Activated CD4-positive, alpha-beta T cell treated with anti-CD3 and anti-CD28 coated beads, Interleukin-2, amount 10 ng/mL, durations not matched to agents 24 days and 14 days (primary cell): ENCODE measurements at regions of chr10 and their contacts with region 1.

Region 1: DNA sequence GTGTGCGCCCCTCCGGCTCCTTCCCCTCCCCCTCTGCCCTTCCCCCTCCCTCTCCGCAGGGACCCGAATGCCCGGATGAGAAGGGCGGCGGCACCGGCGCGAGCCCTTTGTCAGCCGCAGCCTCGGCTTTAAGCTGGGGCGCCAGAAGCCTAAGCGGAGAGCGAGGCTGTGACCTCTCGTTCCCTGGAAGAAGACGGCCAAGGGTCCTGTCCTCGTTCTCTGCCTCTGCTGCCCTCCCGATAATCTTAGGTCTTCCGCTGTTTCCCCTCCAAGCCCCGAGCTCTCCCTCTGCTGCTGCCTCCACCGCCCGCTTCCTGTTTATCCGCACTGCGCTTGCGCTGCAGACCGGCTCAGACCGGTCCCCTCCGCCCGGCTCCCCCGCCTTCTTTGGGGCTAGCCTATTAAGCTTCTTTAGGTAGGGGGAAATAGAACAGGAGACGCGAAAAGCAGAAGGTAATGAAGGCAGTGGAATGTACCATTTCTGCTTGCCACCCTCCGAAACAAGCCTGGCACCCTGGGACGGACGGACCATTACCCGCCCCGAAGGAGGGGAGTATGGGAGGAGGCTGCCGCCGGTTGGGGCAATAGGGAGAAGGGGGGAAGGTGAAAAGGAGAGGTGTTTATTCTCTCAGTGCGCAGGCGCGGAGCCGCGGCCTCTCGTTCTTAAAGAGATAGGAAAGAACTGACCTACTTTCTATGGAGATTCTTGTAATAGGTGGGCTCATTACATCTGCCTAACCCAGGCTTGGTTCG is at the start of gene OGA:
- DNase-seq: peak; percentile 99
- H3K4me3 Mint-ChIP-seq: peak within 1 kb of the TSS; percentile 89
- H3K27ac Mint-ChIP-seq: peak within 1 kb of the TSS; percentile 95
- H3K4me1 Mint-ChIP-seq: peaks cover 48% of the 10 kb centered on the region
- H3K27me3 Mint-ChIP-seq: no peaks in the 10 kb centered on the region
- total RNA-seq, gene OGA: 99.9 and 102 TPM in 2 replicates

Region 2: DNA sequence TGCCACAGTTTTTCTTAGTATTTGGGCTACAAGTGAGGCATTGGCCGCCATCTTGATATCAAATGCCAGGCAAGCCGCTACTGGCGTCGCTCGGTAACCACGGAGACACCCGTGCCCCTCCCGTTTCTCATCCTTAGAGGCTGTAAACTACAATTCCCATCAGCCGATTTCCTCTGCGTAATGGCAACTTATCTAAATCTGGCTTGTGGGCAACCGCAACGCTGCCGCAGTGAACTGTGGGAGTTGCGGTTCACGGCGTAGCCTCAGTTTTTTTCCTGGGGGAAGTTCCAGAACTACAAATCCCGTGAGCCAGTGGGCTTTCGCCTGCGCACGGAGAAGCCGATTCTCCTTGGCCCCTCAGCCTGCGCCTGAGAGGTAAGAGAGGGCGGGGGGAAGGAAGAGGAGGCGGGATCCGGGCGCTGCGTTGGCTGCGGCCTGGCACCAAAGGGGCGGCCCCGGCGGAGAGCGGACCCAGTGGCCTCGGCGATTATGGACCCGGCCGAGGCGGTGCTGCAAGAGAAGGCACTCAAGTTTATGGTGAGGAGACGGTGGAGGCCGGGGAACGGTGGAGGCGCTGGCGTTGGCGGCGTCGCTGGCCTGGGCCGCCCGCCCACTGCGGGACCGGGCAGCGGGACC is 464.5 kb before region 1 on chr10 and contains the start of gene BTRC:
- intact Hi-C with region 1: loop called (anchors 10 kb)
- DNase-seq: peak; percentile 99
- H3K4me3 Mint-ChIP-seq: peak within 1 kb of the TSS; percentile 90
- H3K27ac Mint-ChIP-seq: peak within 1 kb of the TSS; percentile 98
- H3K4me1 Mint-ChIP-seq: peaks cover 24% of the 10 kb centered on the region
- H3K27me3 Mint-ChIP-seq: peaks cover 19% of the 10 kb centered on the region
- total RNA-seq, gene BTRC: 16.2 and 19.0 TPM in 2 replicates

Region 3: DNA sequence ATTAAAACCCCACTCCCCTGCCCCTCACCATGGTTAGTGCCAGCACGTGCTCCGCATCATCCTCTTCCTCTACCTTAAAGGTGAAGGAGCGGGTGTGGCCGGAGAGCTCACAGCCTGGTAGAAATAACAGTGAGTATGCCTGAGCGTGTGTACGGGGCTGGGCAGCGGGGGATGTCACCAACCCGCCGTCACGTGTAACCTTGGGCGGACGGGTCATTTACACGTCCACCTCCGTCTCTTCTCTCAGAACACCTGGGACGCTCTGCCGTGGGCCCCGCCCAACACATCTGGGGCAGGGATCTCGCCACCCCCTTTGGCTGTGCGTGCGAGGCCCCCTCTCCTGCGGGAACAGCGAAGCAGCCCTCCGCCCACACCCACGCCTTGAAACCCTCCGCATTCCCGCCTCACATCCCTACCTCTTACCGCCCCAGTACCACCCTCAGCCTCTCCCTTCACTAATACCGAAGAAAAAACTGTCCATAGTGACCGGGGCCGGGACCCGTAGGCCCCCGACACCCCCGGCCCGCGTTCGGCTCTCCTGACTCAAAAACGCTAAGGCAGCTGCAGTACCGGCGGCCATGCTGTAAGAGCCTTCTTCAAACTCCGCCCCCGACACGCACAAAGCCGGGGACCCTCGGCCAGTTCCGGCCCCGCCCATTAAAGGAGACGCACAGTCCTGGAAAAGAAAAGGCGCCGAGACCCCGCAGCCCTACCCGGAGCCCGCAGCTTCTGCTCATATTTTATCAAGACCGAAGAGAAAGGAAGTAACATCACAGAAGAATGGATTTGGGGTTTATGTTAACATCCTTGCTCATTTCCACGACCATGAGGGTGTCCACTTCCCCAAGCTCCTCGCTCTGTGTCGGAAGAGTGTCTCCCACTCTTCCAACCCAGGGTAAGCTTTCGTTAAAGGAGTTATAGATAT is 35.2 kb before region 1 on chr10 and contains the start of gene NPM3:
- intact Hi-C with region 1: loop called (anchors 1 kb)
- DNase-seq: peak; percentile 96
- H3K4me3 Mint-ChIP-seq: peak within 1 kb of the TSS; percentile 100
- H3K27ac Mint-ChIP-seq: peak within 1 kb of the TSS; percentile 99
- H3K4me1 Mint-ChIP-seq: peaks cover 47% of the 10 kb centered on the region
- H3K27me3 Mint-ChIP-seq: peaks cover 9% of the 10 kb centered on the region
- total RNA-seq, gene NPM3: 172 and 175 TPM in 2 replicates

Region 4: DNA sequence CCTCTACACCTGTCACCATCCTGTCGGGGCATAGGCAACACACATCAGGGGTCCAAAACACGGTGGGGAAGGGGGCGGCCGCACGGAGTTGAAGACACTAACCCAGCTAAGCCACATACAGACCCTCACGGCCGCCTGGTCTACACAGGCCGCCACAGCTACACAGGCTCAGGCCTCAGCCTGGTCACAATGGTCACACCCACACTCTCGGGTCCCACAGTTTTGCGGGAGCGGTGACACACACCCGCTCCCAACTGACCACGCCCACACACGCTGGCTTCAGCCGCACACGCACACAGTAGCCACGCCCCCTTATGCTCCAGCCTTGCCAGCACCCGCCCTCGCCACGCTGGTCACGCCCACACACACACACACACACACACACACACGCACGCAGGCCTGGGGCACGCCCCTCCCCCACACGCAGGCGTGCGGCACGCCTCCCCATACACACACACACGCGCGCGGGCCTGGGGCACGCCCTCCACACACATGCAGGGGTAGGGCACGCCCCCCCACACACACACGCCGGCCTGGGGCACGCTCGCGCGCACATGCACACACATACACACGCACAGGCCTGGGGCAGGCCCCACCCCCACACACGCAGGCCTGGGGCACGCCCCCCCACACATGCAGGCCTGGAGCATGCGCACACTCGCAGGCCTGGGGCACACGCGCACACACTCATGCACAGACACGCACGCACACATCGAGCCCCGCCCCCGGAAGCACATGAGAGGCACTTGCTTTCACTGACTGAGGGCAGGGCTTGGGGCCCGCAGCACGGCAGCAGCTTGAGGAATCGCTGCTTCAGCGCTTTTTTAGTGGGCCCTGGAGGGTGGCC is 12.2 kb after region 1 on chr10:
- intact Hi-C with region 1: loop called (anchors 1 kb)
- DNase-seq: peak; percentile 97
- H3K4me3 Mint-ChIP-seq: peak overlapping the region; percentile 87
- H3K27ac Mint-ChIP-seq: peak overlapping the region; percentile 99
- H3K4me1 Mint-ChIP-seq: peaks cover 49% of the 10 kb centered on the region
- H3K27me3 Mint-ChIP-seq: peaks cover 3% of the 10 kb centered on the region

Region 5: DNA sequence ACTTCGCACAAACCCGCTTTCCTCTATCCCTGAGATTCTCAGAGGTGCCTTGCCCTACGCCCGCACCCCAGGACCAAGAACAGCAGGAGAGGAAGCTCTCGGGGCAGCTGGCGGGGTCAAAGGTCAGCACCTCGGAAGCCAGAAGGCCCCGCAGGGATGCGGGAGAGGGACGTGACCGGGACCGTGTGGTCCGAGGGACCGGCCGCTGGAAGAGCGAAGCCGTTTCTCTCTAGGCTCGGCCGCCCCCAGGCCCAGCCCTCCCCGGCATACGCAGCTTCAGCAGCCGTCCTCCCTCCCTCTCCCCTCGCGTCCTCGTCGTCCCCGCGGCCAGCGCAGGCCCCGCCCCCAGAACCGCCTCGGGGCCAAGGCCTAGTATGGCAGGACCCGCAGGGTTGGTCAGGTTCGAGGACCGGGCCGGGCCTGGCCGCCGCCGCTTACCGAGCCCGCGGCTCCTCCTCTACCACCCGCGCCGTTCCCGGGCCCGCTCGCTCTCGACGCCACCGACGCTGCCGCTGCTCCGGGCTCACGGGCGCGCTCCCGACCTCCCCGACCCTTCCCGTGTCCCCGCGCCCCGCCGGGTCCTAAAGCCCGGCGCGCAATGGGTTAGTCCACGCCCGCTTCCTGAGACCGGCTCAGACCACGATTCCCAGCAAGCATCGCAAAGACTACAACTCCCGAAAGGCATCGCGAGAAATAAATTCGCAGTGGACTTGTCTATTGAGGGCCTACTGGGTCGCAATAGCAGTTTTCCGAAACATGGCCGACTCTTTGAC is 237.5 kb after region 1 on chr10 and contains the start of gene ARMH3:
- intact Hi-C with region 1: loop called (anchors 1 kb)
- DNase-seq: peak; percentile 97
- H3K4me3 Mint-ChIP-seq: peak within 1 kb of the TSS; percentile 98
- H3K27ac Mint-ChIP-seq: peak within 1 kb of the TSS; percentile 95
- H3K4me1 Mint-ChIP-seq: peaks cover 28% of the 10 kb centered on the region
- H3K27me3 Mint-ChIP-seq: no peaks in the 10 kb centered on the region
- total RNA-seq, gene ARMH3: 20.9 and 23.2 TPM in 2 replicates

Region 6: GRCh38 chr10:102641880-102642735 is 823.8 kb after region 1 on chr10:
- intact Hi-C with region 1: loop called (anchors 5 kb)
- DNase-seq: peak; percentile 99
- H3K4me3 Mint-ChIP-seq: peak overlapping the region; percentile 92
- H3K27ac Mint-ChIP-seq: peak overlapping the region; percentile 92
- H3K4me1 Mint-ChIP-seq: peaks cover 18% of the 10 kb centered on the region
- H3K27me3 Mint-ChIP-seq: no peaks in the 10 kb centered on the region